H1 (cell line): ENCODE measurements at regions of chr1 and their contacts with region 1.

Region 1: GRCh38 chr1:89945852-89946476 is 48.9 kb upstream of the ZNF326 start:
- DNase-seq: no peak
- H3K4me3 ChIP-seq: no peak overlapping the region
- H3K27ac ChIP-seq: no peak overlapping the region
- H3K4me1 ChIP-seq: peaks cover 3 to 14% (median 11%) of the 10 kb centered on the region in 4 experiments; a peak in 4 of 7 replicates
- H3K27me3 ChIP-seq: no peaks in the 10 kb centered on the region; a peak in 1 of 7 replicates
- CTCF ChIP-seq: no peak
- EP300 ChIP-seq: no peak
- POLR2A ChIP-seq: no peak
- RAD21 ChIP-seq: no peak

Region 2: GRCh38 chr1:89771991-89772560 is 173.9 kb before region 1 on chr1:
- CTCF ChIA-PET with region 1: no interaction called
- POLR2A ChIA-PET with region 1: no interaction called
- DNase-seq: no peak
- H3K4me3 ChIP-seq: no peak overlapping the region
- H3K27ac ChIP-seq: no peak overlapping the region
- H3K4me1 ChIP-seq: no peaks in the 10 kb centered on the region
- H3K27me3 ChIP-seq: no peaks in the 10 kb centered on the region
- CTCF ChIP-seq: no peak; a peak in 1 of 4 replicates
- EP300 ChIP-seq: no peak
- POLR2A ChIP-seq: no peak
- RAD21 ChIP-seq: no peak

Region 3: GRCh38 chr1:89971600-89971999 is 25.6 kb after region 1 on chr1:
- CTCF ChIA-PET with region 1: interaction called, 10 read pairs
- POLR2A ChIA-PET with region 1: no interaction called
- DNase-seq: no peak
- H3K4me3 ChIP-seq: no peak overlapping the region
- H3K27ac ChIP-seq: no peak overlapping the region
- H3K4me1 ChIP-seq: peaks cover 0 to 1% (median 0%) of the 10 kb centered on the region in 4 experiments; a peak in 1 of 7 replicates
- H3K27me3 ChIP-seq: no peaks in the 10 kb centered on the region
- CTCF ChIP-seq: no peak
- EP300 ChIP-seq: no peak
- POLR2A ChIP-seq: no peak
- RAD21 ChIP-seq: no peak

Region 4: GRCh38 chr1:90012305-90012704 is 66.3 kb after region 1 on chr1:
- CTCF ChIA-PET with region 1: no interaction called
- POLR2A ChIA-PET with region 1: no interaction called
- DNase-seq: no peak
- H3K4me3 ChIP-seq: no peak overlapping the region
- H3K27ac ChIP-seq: no peak overlapping the region
- H3K4me1 ChIP-seq: no peaks in the 10 kb centered on the region
- H3K27me3 ChIP-seq: no peaks in the 10 kb centered on the region
- CTCF ChIP-seq: no peak
- EP300 ChIP-seq: no peak
- POLR2A ChIP-seq: no peak
- RAD21 ChIP-seq: no peak

Region 5: DNA sequence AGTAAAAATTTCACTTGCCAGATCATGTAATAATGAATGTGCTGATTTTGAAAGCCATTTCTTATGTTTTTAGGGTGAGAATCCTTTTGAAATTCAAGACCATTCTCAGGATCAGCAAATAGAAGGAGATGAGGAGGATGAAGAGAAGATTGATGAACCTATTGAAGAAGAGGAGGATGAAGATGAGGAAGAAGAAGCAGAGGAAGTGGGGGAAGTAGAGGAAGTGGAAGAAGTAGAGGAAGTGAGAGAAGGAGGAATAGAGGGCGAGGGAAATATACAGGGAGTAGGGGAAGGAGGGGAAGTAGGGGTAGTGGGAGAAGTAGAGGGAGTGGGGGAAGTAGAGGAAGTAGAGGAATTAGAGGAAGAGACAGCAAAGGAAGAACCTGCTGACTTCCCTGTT is 81.3 kb after region 1 on chr1:
- CTCF ChIA-PET with region 1: no interaction called
- POLR2A ChIA-PET with region 1: no interaction called
- DNase-seq: no peak
- H3K4me3 ChIP-seq: no peak overlapping the region
- H3K27ac ChIP-seq: no peak overlapping the region
- H3K4me1 ChIP-seq: no peaks in the 10 kb centered on the region
- H3K27me3 ChIP-seq: no peaks in the 10 kb centered on the region
- CTCF ChIP-seq: no peak
- EP300 ChIP-seq: no peak
- POLR2A ChIP-seq: no peak
- RAD21 ChIP-seq: no peak

Region 6: DNA sequence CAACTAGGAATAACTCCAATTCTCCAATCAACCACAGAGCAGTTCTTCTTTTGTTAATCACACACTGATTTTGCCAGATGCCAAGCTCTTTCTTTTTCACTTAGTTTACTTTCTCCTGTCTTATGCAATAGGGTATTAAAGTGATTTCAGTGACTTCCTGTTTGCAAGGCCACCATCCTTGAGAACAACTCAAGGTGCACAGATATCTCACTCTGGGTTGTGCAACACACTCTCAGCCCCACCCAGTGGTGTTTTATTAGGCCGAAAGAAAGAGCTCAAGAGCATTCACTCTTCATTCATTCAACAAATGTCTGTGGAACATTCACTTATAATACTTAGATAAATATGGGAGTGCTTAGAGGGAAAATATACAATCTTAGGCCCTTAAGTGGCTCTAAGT is 401.4 kb after region 1 on chr1:
- CTCF ChIA-PET with region 1: no interaction called
- POLR2A ChIA-PET with region 1: no interaction called
- DNase-seq: no peak
- H3K4me3 ChIP-seq: no peak overlapping the region
- H3K27ac ChIP-seq: no peak overlapping the region
- H3K4me1 ChIP-seq: no peaks in the 10 kb centered on the region
- H3K27me3 ChIP-seq: no peaks in the 10 kb centered on the region
- CTCF ChIP-seq: no peak
- EP300 ChIP-seq: no peak
- POLR2A ChIP-seq: no peak
- RAD21 ChIP-seq: no peak